Heart right ventricle (tissue), 16 donors: ENCODE measurements at regions of chr18 and their contacts with region 1.

Region 1: GRCh38 chr18:21303913-21304312 is 61.9 kb downstream of the GREB1L start:
- DNase-seq: no peak
- ATAC-seq: no peak
- H3K4me3 ChIP-seq: no peak overlapping the region
- H3K27ac ChIP-seq: no peak overlapping the region
- H3K4me1 ChIP-seq: peaks cover 0 to 6% (median 0%) of the 10 kb centered on the region in 9 donors
- H3K27me3 ChIP-seq: no peaks in the 10 kb centered on the region
- CTCF ChIP-seq: no peak

Region 2: GRCh38 chr18:21242141-21242779 is 61.7 kb before region 1 on chr18 and contains the start of gene GREB1L:
- intact Hi-C with region 1: loop called in 1 of 10 experiments (anchors 10 kb)
- DNase-seq: peak; percentile 42 to 69
- ATAC-seq: peak; percentile 86 to 97 (median 94)
- H3K4me3 ChIP-seq: peak within 1 kb of the TSS; percentile 48 to 71 (median 66)
- H3K27ac ChIP-seq: peak within 1 kb of the TSS in 8 of 10 donors; percentile 12 to 77 (median 58)
- H3K4me1 ChIP-seq: peaks cover 0 to 21% (median 16%) of the 10 kb centered on the region in 9 donors
- H3K27me3 ChIP-seq: peaks cover 0 to 80% (median 46%) of the 10 kb centered on the region in 7 donors
- CTCF ChIP-seq: peak in 6 of 9 donors; percentile 19 to 58 (median 44)
- total RNA-seq, gene GREB1L: 2.7 to 14.3 (median 11.8) TPM

Region 3: GRCh38 chr18:21257386-21257785 is 46.5 kb before region 1 on chr18:
- intact Hi-C with region 1: no loop called
- DNase-seq: no peak
- ATAC-seq: no peak
- H3K4me3 ChIP-seq: no peak overlapping the region
- H3K27ac ChIP-seq: no peak overlapping the region
- H3K4me1 ChIP-seq: peaks cover 0 to 7% (median 0%) of the 10 kb centered on the region in 9 donors
- H3K27me3 ChIP-seq: peaks cover 0 to 4% (median 0%) of the 10 kb centered on the region in 7 donors
- CTCF ChIP-seq: no peak